HepG2 (cell line): ENCODE measurements at regions of chr2 and their contacts with region 1.

Region 1: DNA sequence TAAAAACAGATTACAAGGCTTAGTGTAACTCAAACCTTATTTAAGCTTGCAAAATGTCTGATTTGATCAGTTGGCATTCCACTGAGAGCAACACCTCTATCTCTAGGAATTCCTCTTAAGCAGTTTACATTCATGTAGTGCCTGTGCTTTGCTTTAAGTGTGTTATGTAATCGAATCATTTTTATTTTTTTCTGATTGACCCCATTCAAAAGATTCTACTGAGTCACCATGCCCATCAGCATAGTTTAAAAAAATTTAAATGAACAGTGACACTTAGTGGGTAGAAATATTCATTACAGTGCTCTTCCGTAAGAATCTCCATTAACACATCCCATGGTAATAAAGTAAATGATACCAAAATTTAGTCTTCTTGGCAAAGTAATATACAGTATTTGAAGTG is 67.8 kb upstream of the SLC4A10 start:
- DNase-seq: no peak
- ATAC-seq: no peak
- H3K4me3 ChIP-seq: no peak overlapping the region
- H3K27ac ChIP-seq: no peak overlapping the region
- H3K4me1 ChIP-seq: no peaks in the 10 kb centered on the region
- H3K27me3 ChIP-seq: no peaks in the 10 kb centered on the region
- CTCF ChIP-seq: no peak
- EP300 ChIP-seq: no peak
- POLR2A ChIP-seq: no peak
- RAD21 ChIP-seq: no peak

Region 2: GRCh38 chr2:161238560-161239325 is 317.7 kb before region 1 on chr2:
- CTCF ChIA-PET with region 1: no interaction called
- POLR2A ChIA-PET with region 1: no interaction called
- in situ Hi-C with region 1: no loop called
- intact Hi-C with region 1: loop called (anchors 10 kb)
- DNase-seq: no peak
- ATAC-seq: peak; percentile 63
- H3K4me3 ChIP-seq: peak overlapping the region; percentile 55 to 71 (median 58)
- H3K27ac ChIP-seq: no peak overlapping the region
- H3K4me1 ChIP-seq: peaks cover 12% of the 10 kb centered on the region
- H3K27me3 ChIP-seq: peaks cover under 1 to 11% of the 10 kb centered on the region in 2 experiments; a peak in 3 of 5 replicates
- CTCF ChIP-seq: no peak
- EP300 ChIP-seq: no peak
- POLR2A ChIP-seq: no peak
- RAD21 ChIP-seq: no peak; the same call in 1 of the 2 replicates

Region 3: DNA sequence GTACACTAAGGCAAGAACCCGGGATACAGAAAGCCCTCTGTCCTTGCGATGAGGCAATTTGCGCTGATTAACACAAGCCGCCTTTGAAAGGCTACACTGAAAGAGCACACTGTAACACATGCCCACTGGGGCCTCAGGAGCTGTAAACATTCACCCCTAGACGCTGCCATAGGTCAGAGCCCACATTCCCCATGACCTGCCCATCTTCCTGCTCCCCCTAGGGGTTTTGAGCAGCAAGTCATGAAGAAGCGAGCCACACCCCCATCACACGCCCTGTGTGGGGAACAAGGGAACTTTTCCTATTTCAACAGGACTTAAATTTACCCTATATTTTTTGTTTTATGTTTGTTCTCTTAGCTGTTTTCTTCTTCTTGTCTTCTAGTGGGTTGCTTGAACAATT is 20.0 kb after region 1 on chr2:
- CTCF ChIA-PET with region 1: no interaction called
- POLR2A ChIA-PET with region 1: no interaction called
- in situ Hi-C with region 1: no loop called
- intact Hi-C with region 1: no loop called
- DNase-seq: peak; percentile 68
- ATAC-seq: peak; percentile 100
- H3K4me3 ChIP-seq: no peak overlapping the region
- H3K27ac ChIP-seq: no peak overlapping the region
- H3K4me1 ChIP-seq: no peaks in the 10 kb centered on the region
- H3K27me3 ChIP-seq: no peaks in the 10 kb centered on the region
- CTCF ChIP-seq: peak; percentile 66
- EP300 ChIP-seq: no peak
- POLR2A ChIP-seq: no peak
- RAD21 ChIP-seq: no peak